Lower leg skin (tissue), 4 donors: ENCODE measurements at regions of chr9 and their contacts with region 1.

Region 1: DNA sequence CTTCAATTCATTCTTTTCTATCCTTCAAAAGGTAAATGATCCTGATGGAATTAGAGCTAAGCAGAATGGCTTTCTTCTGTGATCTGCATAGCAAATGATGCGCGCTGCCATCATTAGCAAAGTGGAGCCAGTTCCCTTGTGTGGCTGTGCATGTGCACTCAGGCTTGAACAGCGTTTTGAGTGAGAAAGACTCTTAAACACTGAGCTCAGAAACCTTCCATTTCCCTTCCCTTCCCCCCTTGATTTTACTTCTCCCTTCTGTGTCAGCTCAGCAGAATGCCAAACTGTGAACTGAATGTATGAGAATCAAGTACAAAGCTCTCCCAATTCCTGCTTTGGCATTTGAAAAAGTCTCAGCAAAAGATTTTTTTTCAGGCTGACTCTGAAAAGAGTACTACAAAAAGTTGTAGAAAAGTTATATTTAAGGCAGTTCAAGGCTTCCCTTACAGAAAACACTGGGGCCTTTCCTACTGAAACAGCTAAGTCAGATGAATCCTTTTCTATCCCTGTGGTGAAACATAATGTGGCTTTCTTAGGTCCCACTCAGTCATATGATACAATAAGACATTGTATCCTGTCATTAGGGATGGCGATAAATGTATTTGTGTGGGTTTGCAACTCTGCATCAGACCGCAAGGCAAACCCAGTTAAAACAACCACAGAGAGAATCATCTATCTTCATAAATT is 222.8 kb downstream of the CAAP1 start:
- DNase-seq: no peak
- H3K4me3 ChIP-seq: no peak overlapping the region
- CTCF ChIP-seq: no peak
- POLR2A ChIP-seq: no peak

Region 2: GRCh38 chr9:26650325-26650724 is 19.5 kb before region 1 on chr9:
- intact Hi-C with region 1: loop called (anchors 1 kb)
- DNase-seq: no peak
- H3K4me3 ChIP-seq: no peak overlapping the region
- CTCF ChIP-seq: no peak
- POLR2A ChIP-seq: no peak

Region 3: GRCh38 chr9:26975693-26976059 is 305.9 kb after region 1 on chr9:
- intact Hi-C with region 1: no loop called
- DNase-seq: no peak
- H3K4me3 ChIP-seq: no peak overlapping the region
- CTCF ChIP-seq: no peak
- POLR2A ChIP-seq: no peak